ENCODE measurements at regions of chr1 and their contacts with region 1.

Region 1: DNA sequence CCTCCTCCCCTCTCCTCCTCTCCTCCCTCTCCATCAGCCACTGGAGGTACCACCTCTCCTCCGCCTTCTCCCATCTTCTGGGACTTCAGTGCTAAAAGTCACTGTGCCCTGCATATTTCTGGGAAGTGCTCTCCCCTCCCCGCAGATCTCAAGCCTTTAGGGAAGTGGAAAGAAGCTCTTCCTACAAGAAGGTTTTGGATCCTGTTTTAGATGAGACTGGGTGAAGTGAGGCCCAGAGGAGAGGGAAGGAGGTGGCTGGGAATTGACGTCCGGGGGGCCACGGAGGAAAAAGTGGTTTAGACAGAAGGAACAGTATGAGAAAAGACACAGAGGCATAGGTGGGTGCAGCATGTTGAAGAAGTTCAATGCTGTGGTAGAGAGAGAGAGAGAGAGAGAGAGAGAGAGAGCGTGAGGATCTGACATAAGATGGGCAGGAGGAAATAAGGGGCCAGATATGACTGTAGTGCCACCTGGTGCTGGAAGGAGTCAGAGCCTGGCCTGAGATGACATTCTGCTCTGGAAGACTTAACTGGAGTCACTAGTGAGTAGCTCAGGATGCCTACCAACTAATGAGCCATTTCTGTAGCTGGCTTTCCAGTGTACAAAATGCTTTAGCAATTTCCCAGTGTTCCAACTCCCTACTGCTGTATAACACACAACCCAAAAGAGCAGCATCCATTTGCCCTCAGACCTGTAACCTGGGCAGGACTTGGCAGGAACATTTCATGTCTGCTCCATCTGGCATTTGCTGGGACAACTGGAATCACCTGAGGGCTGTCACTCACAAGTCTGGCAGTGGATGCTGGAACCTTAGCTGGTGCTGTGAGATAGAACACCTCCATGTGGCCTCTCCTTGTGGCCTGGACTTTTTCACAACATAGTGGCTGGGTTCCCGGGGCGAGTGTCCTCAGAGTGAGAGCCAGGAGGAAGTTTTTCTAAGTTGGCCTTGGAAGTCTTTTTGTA is 16.6 kb upstream of the ZSCAN20 start:
- DNase-seq: peak; percentile 83

Region 2: DNA sequence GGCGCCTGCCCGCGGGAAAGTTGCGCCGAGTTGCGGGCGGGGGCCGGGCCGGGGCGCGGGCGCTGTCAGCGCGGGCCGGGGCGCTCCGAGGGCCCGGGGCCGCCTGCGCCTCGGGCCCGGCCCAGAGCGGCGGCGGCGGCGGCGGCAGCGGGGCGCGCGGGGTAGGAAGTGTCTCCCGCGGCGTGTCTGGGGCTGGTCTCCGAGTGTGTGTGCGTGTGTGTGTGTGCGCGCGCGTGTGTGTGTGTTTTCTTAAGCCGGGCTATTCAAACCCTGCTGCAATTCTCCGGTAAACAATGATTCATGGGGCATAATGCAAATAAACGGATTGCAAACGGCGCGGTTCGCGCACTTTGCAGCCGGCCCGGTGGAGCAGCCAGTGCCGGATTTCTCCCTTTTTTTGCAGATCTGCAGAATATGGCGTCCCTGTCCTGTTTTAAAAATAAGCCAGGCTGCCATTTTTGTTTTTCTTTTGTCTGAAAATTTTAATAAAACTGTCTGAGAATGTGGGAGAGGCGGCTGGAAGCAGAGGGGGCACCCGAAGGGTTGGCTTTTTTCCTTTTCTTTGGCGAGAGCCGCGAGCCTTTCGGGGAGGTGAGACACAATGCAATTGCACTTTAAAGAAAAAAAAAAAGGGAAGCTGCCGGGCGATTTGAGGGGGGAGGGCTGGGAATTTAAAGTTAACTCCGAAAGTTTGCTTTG is 199.0 kb before region 1 on chr1:
- CTCF ChIA-PET with region 1: no interaction called
- POLR2A ChIA-PET with region 1: no interaction called
- DNase-seq: peak; percentile 65

Region 3: DNA sequence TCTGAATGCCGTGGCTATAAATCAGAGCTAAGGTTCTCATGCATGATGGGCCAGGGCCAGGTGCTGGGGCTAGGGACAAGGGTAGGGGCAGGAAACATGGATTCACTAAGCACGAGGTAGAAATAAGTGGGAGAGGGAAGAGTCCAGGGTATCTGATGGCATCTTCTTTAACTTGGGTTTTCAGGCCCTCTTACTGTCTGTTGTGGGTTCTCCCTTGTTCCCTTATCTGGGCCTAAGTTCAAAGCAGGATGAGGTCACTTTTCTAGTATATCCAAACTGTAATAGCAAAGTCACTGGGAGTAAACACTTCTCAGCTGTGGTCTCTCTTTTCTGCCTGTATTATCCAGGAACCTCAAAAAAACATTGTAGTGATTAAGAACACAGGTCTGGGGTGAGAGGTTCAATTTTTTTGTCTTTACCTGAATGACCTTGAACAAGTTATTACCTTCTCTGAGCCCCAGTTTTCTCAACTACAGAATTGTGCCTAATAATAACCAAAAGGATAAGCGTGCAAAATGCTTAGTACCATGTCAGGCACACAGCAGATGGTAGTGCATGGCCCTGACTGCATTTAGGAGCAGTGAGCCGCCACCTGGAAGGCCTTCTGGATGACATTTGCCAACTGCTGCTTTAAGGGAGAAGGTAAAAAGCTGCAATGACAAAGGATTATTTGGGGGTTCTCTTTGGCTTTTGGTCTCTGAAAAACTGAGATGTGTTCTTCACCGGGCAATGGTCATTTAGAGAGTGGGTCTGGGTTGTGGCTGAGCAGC is 81.3 kb before region 1 on chr1:
- CTCF ChIA-PET with region 1: interaction called, 11 read pairs
- POLR2A ChIA-PET with region 1: no interaction called
- DNase-seq: no peak

Measured in HEK293T (cell line).